ENCODE measurements at regions of chr5 and their contacts with region 1.

Region 1: DNA sequence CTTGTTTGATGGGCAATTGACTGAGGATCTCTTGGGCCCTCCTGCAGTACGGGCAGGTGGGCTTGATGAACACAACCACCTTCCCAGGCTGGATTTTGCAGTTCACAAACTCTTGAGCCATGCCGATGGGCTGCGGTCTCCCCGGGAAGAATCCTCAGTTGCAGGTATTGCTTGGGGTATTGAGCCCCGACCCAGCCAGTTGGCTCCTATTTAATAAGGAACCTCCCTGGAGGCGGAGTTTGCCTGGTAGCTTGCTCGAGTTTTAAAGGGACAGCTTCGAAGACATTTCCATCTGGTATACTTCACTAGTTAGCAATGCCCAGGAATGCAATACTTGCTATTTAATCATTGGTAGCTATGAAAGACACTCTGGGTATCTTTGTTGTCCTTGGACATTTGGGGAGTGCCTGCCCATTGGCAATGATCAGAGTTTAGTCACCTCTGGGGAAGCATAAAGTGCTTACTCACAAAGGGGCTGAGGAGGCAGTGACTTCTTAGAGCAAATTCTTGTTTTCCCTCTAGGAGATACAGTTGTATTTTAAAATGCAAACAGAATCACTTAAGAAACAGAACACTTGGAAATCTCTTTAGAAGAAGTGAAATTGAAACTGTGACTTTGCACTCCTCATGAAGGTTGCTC is at the start of gene GLRX:
- DNase-seq: peak; percentile 68
- ATAC-seq: peak; percentile 18
- H3K4me3 Mint-ChIP-seq: peak within 1 kb of the TSS; percentile 92
- H3K27ac Mint-ChIP-seq: peak within 1 kb of the TSS; percentile 92
- H3K4me1 Mint-ChIP-seq: peaks cover 62% of the 10 kb centered on the region
- H3K27me3 Mint-ChIP-seq: no peaks in the 10 kb centered on the region
- total RNA-seq, gene GLRX: 21.0 to 31.5 TPM

Region 2: DNA sequence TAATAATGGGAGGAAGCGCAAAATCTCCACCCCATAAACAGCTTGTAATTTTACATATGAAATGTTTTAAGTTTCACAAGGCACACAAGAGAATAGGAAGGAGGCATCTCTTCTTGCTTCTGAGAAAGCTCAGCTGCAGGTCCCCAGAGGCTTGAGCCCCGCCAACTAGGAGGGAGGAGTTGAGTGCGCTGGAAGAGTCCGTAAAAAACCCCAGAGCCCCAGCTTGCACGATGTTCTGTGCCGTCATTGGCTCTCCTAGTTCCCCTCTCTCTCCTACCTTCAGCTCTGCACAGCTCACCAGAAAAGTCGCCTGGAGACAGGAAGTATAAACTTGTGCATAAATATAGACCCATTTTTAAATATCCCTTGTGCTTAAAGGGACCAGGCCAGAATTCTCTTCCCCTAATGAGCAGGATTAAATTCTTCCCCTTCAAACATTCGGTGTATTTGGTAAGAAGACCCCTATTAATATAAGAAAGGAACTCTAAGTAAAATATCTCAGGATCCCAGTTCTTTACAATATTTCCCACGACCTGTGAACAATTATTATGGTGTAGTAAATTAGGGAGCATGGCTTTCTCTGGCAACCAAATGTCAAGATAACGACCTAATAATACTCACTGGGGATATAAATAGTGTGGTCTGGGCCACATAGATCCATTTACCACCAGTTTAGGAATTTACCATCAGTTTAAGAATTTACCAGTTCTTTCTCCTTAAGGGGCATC is 13.8 kb before region 1 on chr5:
- CTCF ChIA-PET with region 1: interaction called, 62 read pairs
- POLR2A ChIA-PET with region 1: interaction called, 4 read pairs
- intact Hi-C with region 1: loop called (anchors 1 kb)
- DNase-seq: peak; percentile 87
- ATAC-seq: peak; percentile 99
- H3K4me3 Mint-ChIP-seq: peak overlapping the region; percentile 28
- H3K27ac Mint-ChIP-seq: peak overlapping the region; percentile 85
- H3K4me1 Mint-ChIP-seq: peaks cover 56% of the 10 kb centered on the region
- H3K27me3 Mint-ChIP-seq: no peaks in the 10 kb centered on the region

Region 3: GRCh38 chr5:95835682-95836385 is 13.2 kb after region 1 on chr5:
- CTCF ChIA-PET with region 1: interaction called, 10 read pairs
- POLR2A ChIA-PET with region 1: interaction called, 3 read pairs
- intact Hi-C with region 1: loop called (anchors 1 kb)
- DNase-seq: peak; percentile 49
- ATAC-seq: no peak
- H3K4me3 Mint-ChIP-seq: peak overlapping the region; percentile 79
- H3K27ac Mint-ChIP-seq: peak overlapping the region; percentile 91
- H3K4me1 Mint-ChIP-seq: peaks cover 44% of the 10 kb centered on the region
- H3K27me3 Mint-ChIP-seq: no peaks in the 10 kb centered on the region

Region 4: GRCh38 chr5:95927927-95928723 is 105.5 kb after region 1 on chr5:
- CTCF ChIA-PET with region 1: no interaction called
- POLR2A ChIA-PET with region 1: no interaction called
- intact Hi-C with region 1: no loop called
- DNase-seq: no peak
- ATAC-seq: peak; percentile 64
- H3K4me3 Mint-ChIP-seq: no peak overlapping the region
- H3K27ac Mint-ChIP-seq: peak overlapping the region; percentile 75
- H3K4me1 Mint-ChIP-seq: peaks cover 21% of the 10 kb centered on the region
- H3K27me3 Mint-ChIP-seq: no peaks in the 10 kb centered on the region

Region 5: GRCh38 chr5:96017951-96018350 is 195.3 kb after region 1 on chr5:
- CTCF ChIA-PET with region 1: no interaction called
- POLR2A ChIA-PET with region 1: no interaction called
- intact Hi-C with region 1: no loop called
- DNase-seq: no peak
- ATAC-seq: no peak
- H3K4me3 Mint-ChIP-seq: no peak overlapping the region
- H3K27ac Mint-ChIP-seq: no peak overlapping the region
- H3K4me1 Mint-ChIP-seq: no peaks in the 10 kb centered on the region
- H3K27me3 Mint-ChIP-seq: no peaks in the 10 kb centered on the region

Region 6: GRCh38 chr5:96885518-96886338 is 1063.1 kb after region 1 on chr5:
- CTCF ChIA-PET with region 1: no interaction called
- POLR2A ChIA-PET with region 1: no interaction called
- intact Hi-C with region 1: loop called in 1 of 2 experiments (anchors 5 kb)
- DNase-seq: peak; percentile 49
- ATAC-seq: peak; percentile 85
- H3K4me3 Mint-ChIP-seq: peak overlapping the region; percentile 32
- H3K27ac Mint-ChIP-seq: peak overlapping the region; percentile 89
- H3K4me1 Mint-ChIP-seq: peaks cover 52% of the 10 kb centered on the region
- H3K27me3 Mint-ChIP-seq: no peaks in the 10 kb centered on the region

Measured in activated CD4-positive, alpha-beta T cell treated with anti-CD3 and anti-CD28 coated beads for 36 hours (primary cell).